Lower lobe of right lung (tissue), 2 donors: ENCODE measurements at regions of chr10 and their contacts with region 1.

Region 1: GRCh38 chr10:96229568-96230030 is 41.8 kb downstream of the BLNK start:
- DNase-seq: peak; percentile 87
- ATAC-seq: peak; percentile 86 to 94
- H3K4me3 ChIP-seq: no peak overlapping the region
- H3K27ac ChIP-seq: no peak overlapping the region
- H3K4me1 ChIP-seq: no peaks in the 10 kb centered on the region
- H3K27me3 ChIP-seq: no peaks in the 10 kb centered on the region
- CTCF ChIP-seq: peak; percentile 62

Region 2: DNA sequence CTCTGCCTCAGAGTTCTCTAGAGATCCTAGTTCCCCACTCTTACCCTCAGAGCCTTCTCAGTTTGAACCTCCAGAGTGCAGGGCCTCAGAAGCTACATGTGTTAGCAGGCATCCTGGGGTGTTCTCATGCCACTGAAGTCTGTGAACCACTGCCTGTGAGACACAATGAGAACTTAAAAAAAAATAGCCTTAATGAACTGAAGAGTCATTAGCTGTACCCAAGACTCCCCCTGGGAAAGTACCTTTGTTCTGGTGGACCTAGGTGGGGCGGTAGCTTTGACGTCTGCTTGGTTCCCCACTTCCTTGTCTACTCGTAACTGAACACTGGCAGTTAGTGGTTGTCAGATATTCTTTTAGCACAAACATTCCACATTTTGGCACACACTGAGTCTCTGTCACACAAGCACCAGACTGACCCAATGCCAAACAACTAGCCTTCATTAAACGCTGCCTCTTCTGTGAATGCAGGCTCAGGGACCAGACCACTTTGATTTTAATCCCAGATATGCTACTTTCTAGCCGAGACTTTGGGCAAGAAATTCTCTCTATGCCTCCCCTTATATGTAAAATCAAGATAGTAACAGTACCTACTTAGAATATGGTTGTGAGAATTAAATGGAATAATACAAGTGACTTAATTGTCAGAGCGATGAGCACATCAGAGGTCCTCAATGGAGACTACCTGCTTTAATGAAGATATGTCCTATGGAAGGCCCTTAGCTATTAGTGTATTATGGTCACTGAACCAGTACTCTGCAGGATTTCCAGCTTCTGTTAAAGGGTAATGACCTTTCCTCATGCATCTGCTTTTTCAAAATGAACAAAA is 397.2 kb before region 1 on chr10:
- intact Hi-C with region 1: no loop called
- DNase-seq: no peak
- ATAC-seq: peak; percentile 64 to 68
- H3K4me3 ChIP-seq: no peak overlapping the region
- H3K27ac ChIP-seq: peak overlapping the region; percentile 14
- H3K4me1 ChIP-seq: peaks cover 18% of the 10 kb centered on the region
- H3K27me3 ChIP-seq: no peaks in the 10 kb centered on the region
- CTCF ChIP-seq: no peak

Region 3: DNA sequence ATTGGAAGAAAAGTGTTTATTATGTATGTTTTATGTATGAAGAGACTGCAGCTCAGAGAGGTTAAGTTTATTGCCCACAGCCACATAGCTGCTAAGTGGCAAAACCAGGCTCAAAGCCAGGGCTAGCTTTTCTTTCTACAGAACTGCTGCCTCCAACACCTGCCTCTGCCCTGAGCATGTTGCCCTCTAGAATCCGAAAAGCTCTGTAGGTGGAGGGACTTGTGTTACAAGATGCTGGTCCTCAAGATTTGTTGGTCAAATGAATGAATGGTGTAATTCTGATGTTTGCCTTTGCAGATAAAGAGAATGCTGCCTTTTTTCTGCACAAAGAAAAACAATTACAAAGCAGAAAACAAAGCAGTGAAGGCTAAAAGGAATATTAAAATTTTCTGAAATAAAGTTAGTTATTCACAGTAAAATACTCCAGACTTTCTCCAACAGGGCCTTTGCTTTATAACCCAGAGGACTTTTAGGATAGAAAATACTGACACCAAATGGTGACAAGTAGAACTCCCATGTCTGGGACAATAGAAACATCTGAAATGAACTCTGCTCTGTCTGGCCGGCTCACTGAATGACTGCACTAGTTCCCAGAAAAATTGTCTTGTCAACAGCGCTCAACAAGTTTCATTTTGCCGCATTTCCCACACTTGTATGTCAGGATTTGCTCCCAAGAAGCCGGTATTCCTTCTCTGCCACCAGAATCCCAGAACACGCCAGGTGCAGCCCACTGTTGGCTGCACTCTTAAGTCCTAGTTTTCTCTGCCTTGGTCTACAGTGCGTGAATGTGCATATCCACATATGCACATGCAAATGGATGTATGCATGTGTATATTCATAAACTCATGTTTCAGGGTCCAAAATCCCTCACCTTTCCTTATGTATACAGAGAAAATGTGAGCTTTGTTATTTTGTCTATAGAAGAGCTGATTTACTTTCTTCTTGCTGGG is 63.6 kb after region 1 on chr10:
- intact Hi-C with region 1: loop called (anchors 5 kb)
- DNase-seq: no peak
- ATAC-seq: peak; percentile 70 to 91
- H3K4me3 ChIP-seq: no peak overlapping the region
- H3K27ac ChIP-seq: no peak overlapping the region
- H3K4me1 ChIP-seq: no peaks in the 10 kb centered on the region
- H3K27me3 ChIP-seq: no peaks in the 10 kb centered on the region
- CTCF ChIP-seq: peak; percentile 66